MCF 10A (cell line): ENCODE measurements at regions of chr15 and their contacts with region 1.

Region 1: DNA sequence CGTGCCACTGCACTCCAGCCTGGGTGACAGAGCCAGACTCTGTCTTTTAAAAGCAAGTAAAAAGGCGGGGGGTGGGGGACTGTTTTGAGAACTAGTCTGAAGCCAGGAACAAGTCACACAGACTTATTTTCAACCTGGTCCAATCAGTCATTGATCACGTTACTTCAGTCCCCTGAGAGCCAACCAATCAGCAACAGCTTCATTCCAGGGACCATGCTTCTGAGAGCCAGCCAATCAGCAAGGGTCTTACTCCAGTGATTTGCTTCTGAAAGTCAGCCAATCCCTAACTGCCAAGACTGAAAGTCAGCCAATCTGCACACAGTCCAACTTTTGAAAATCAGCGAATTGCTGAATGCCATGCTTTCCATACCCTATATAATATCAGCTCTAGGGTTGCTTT is 48.6 kb upstream of the C15orf39 start:
- DNase-seq: peak; percentile 37
- H3K4me3 Mint-ChIP-seq: no peak overlapping the region
- H3K27ac Mint-ChIP-seq: no peak overlapping the region
- H3K4me1 Mint-ChIP-seq: peaks cover 12% of the 10 kb centered on the region
- H3K27me3 Mint-ChIP-seq: no peaks in the 10 kb centered on the region
- CTCF ChIP-seq: no peak

Region 2: GRCh38 chr15:75104804-75105535 is 48.1 kb before region 1 on chr15:
- CTCF ChIA-PET with region 1: no interaction called
- POLR2A ChIA-PET with region 1: no interaction called
- intact Hi-C with region 1: loop called (anchors 5 kb)
- DNase-seq: peak; percentile 86
- H3K4me3 Mint-ChIP-seq: no peak overlapping the region
- H3K27ac Mint-ChIP-seq: peak overlapping the region; percentile 61
- H3K4me1 Mint-ChIP-seq: peaks cover 35% of the 10 kb centered on the region
- H3K27me3 Mint-ChIP-seq: no peaks in the 10 kb centered on the region
- CTCF ChIP-seq: no peak